Prostate gland (tissue), 2 donors: ENCODE measurements at regions of chr1 and their contacts with region 1.

Region 1: GRCh38 chr1:33295450-33296081 is 25.3 kb downstream of the A3GALT2 start:
- DNase-seq: peak; percentile 87
- H3K4me3 ChIP-seq: no peak overlapping the region
- H3K27ac ChIP-seq: no peak overlapping the region
- H3K4me1 ChIP-seq: no peaks in the 10 kb centered on the region
- H3K27me3 ChIP-seq: no peaks in the 10 kb centered on the region
- CTCF ChIP-seq: peak; percentile 97 to 99 (median 98)
- POLR2A ChIP-seq: no peak

Region 2: DNA sequence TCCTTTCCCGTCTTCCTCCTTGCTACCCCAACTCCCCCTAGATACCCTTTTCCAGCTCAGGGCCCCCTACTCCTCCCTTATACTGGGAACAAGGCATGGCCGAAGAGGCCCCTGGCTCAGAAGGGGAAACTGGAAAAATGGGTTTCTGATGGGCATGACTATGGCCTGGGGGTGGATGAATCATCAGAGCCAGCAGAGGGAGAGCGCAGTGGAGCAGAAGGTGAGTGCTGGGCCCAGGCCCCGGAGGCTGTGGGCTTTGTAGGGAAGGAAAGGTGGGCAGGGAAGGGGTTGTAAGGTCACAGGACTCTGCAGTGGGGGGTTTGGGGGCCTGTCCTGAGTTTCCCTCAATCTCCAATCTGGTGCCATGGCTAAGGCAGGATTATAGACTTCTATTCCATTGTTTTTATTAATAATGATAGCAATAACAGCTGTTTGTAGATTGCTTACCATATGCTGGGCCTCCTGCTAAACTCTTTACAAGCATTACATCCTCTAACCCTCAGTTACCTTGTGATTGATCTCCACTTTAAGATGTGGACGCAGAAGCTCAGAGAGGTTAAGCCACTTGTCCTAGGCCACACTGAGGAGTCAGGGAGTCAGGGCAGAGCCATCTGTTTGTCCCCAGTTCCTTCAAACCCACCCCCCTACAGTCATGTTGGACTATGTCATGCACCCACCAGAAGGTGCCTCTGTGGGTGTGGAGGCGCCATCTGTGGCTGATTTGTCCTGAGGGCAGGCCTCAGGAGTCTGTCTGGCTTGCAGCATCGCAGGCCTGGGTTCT is 75.5 kb before region 1 on chr1:
- intact Hi-C with region 1: loop called (anchors 10 kb)
- DNase-seq: peak; percentile 15
- H3K4me3 ChIP-seq: no peak overlapping the region
- H3K27ac ChIP-seq: no peak overlapping the region
- H3K4me1 ChIP-seq: no peaks in the 10 kb centered on the region
- H3K27me3 ChIP-seq: no peaks in the 10 kb centered on the region
- CTCF ChIP-seq: peak in 1 of 4 experiments; percentile 19
- POLR2A ChIP-seq: no peak

Region 3: DNA sequence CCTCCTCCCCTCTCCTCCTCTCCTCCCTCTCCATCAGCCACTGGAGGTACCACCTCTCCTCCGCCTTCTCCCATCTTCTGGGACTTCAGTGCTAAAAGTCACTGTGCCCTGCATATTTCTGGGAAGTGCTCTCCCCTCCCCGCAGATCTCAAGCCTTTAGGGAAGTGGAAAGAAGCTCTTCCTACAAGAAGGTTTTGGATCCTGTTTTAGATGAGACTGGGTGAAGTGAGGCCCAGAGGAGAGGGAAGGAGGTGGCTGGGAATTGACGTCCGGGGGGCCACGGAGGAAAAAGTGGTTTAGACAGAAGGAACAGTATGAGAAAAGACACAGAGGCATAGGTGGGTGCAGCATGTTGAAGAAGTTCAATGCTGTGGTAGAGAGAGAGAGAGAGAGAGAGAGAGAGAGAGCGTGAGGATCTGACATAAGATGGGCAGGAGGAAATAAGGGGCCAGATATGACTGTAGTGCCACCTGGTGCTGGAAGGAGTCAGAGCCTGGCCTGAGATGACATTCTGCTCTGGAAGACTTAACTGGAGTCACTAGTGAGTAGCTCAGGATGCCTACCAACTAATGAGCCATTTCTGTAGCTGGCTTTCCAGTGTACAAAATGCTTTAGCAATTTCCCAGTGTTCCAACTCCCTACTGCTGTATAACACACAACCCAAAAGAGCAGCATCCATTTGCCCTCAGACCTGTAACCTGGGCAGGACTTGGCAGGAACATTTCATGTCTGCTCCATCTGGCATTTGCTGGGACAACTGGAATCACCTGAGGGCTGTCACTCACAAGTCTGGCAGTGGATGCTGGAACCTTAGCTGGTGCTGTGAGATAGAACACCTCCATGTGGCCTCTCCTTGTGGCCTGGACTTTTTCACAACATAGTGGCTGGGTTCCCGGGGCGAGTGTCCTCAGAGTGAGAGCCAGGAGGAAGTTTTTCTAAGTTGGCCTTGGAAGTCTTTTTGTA is 160.3 kb after region 1 on chr1:
- intact Hi-C with region 1: loop called (anchors 5 kb)
- DNase-seq: peak; percentile 58
- H3K4me3 ChIP-seq: no peak overlapping the region
- H3K27ac ChIP-seq: peak overlapping the region in 1 of 2 donors; percentile 4
- H3K4me1 ChIP-seq: no peaks in the 10 kb centered on the region
- H3K27me3 ChIP-seq: no peaks in the 10 kb centered on the region
- CTCF ChIP-seq: peak; percentile 27 to 78 (median 67)
- POLR2A ChIP-seq: no peak

Region 4: GRCh38 chr1:33472349-33472980 is 176.9 kb after region 1 on chr1 and contains the start of gene ZSCAN20:
- intact Hi-C with region 1: loop called (anchors 2 kb)
- DNase-seq: peak; percentile 96
- H3K4me3 ChIP-seq: peak within 1 kb of the TSS; percentile 41 to 44
- H3K27ac ChIP-seq: peak within 1 kb of the TSS; percentile 53 to 70
- H3K4me1 ChIP-seq: no peaks in the 10 kb centered on the region
- H3K27me3 ChIP-seq: no peaks in the 10 kb centered on the region
- CTCF ChIP-seq: peak in 2 of 4 experiments; percentile 18 to 28
- POLR2A ChIP-seq: peak; percentile 41
- total RNA-seq, gene ZSCAN20: 4.7 to 11.1 TPM